PC-9 (cell line): ENCODE measurements at regions of chr5 and their contacts with region 1.

Region 1: GRCh38 chr5:172293054-172293744 is 9.6 kb upstream of the UBTD2 start:
- DNase-seq: peak; percentile 51 to 66
- H3K4me3 ChIP-seq: no peak overlapping the region
- H3K27ac ChIP-seq: no peak overlapping the region
- H3K4me1 ChIP-seq: 0 out of 2 replicates have a peak, but pooled peaks cover 4% of the 10 kb centered on the region
- H3K27me3 ChIP-seq: no peaks in the 10 kb centered on the region
- CTCF ChIP-seq: peak; percentile 89

Region 2: DNA sequence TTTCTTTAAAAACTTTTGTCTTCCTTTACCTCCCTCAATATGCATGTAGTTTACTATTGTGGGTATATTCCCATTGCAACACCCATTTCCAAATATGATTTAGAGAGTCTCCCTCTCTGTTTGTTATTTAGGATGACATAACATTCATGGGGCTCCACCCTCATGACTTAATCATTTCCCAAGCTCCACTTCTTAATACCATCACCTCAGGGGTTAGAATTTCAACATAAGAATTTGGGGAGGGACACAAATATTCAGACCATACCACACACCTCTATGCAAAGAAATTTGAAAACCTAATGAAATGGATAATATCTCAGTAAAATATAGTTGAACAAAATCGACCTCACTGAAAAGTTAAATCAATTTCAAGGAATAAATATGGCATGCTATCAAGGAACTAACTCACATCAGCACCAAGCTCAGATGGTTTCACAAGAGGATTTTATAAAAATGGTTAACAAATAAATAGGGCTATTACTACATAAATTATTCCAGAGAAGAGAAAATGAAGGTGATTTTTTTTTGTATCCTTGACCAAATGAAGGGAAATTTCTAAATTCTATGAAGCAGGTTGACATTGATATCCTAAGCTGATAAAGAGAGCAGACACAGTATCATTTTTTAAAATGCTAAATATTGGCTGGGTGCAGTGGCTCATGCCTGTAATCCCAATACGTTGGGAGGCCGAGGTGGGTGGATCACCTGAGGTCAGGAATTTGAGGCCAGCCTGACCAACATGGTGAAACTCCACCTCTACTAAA is 10.6 kb after region 1 on chr5:
- CTCF ChIA-PET with region 1: interaction called, 5 read pairs
- POLR2A ChIA-PET with region 1: no interaction called
- intact Hi-C with region 1: loop called (anchors 1 kb)
- DNase-seq: peak in 1 of 2 experiments; percentile 64
- H3K4me3 ChIP-seq: peak overlapping the region; percentile 40; the same call in 1 of the 2 replicates
- H3K27ac ChIP-seq: peak overlapping the region; percentile 77
- H3K4me1 ChIP-seq: peaks cover 29% of the 10 kb centered on the region
- H3K27me3 ChIP-seq: no peaks in the 10 kb centered on the region
- CTCF ChIP-seq: no peak